Activated CD4-positive, alpha-beta T cell treated with anti-CD3 and anti-CD28 coated beads, Interleukin-2, amount 10 ng/mL, durations not matched to agents 24 days and 14 days (primary cell): ENCODE measurements at regions of chr3 and their contacts with region 1.

Region 1: GRCh38 chr3:48847504-48848423 is at the start of gene PRKAR2A:
- DNase-seq: peak; percentile 95
- H3K4me3 Mint-ChIP-seq: peak within 1 kb of the TSS; percentile 85
- H3K27ac Mint-ChIP-seq: peak within 1 kb of the TSS; percentile 90
- H3K4me1 Mint-ChIP-seq: peaks cover 19% of the 10 kb centered on the region
- H3K27me3 Mint-ChIP-seq: no peaks in the 10 kb centered on the region
- total RNA-seq, gene PRKAR2A: 31.9 and 39.4 TPM in 2 replicates

Region 2: GRCh38 chr3:48918388-48919214 is 70.8 kb after region 1 on chr3 and contains the start of gene ARIH2:
- intact Hi-C with region 1: loop called (anchors 1 kb)
- DNase-seq: peak; percentile 97
- H3K4me3 Mint-ChIP-seq: peak within 1 kb of the TSS; percentile 91
- H3K27ac Mint-ChIP-seq: peak within 1 kb of the TSS; percentile 97
- H3K4me1 Mint-ChIP-seq: peaks cover 22% of the 10 kb centered on the region
- H3K27me3 Mint-ChIP-seq: no peaks in the 10 kb centered on the region
- total RNA-seq, gene ARIH2: 157 TPM in 2 replicates